Gastrocnemius medialis (tissue), 4 donors: ENCODE measurements at regions of chr7 and their contacts with region 1.

Region 1: GRCh38 chr7:26052721-26053120 is 99.3 kb upstream of the NFE2L3 start:
- DNase-seq: no peak
- ATAC-seq: no peak
- H3K4me3 ChIP-seq: no peak overlapping the region
- H3K27ac ChIP-seq: no peak overlapping the region
- H3K4me1 ChIP-seq: no peaks in the 10 kb centered on the region
- H3K27me3 ChIP-seq: peaks cover 0 to 9% (median 0%) of the 10 kb centered on the region in 3 donors
- CTCF ChIP-seq: no peak
- POLR2A ChIP-seq: no peak

Region 2: DNA sequence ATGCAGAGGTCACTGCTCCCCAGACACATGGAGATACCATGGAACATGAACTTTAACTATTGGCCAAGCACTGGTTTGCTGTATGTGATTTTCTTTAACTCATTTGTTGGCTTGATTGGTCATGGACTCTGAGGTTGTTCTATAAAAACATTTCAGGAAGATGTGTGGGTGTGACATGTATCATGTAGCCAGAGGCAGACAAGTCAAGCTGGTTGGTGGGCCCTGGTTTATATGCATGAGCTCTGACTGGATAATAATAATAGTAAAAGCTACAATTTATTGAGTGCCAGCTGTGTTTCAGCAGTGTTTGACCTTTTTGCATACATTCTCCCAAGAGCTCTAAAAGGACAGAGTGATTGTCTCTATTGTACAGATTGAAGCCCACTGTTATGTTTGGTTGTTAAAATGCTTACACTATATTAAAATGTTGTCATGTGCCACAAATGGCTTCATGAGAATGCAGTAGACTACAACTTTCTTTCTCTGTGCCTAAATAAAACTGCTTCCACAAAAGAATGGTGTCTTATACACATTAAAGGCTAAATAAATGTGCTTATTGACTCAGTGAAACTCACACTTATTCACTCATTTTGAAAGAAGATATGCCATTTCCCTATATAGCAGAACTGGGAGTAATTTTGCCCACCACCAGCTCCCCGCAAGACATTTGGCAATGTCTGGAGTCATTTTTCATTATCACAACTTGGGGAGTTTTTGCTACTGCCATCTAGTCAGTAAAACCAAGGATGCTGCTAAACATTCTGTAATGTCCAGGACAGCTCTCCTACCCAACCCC is 144.4 kb before region 1 on chr7:
- in situ Hi-C with region 1: loop called in 1 of 4 experiments (anchors 5 kb)
- intact Hi-C with region 1: no loop called
- DNase-seq: no peak
- ATAC-seq: no peak
- H3K4me3 ChIP-seq: no peak overlapping the region
- H3K27ac ChIP-seq: no peak overlapping the region
- H3K4me1 ChIP-seq: no peaks in the 10 kb centered on the region
- H3K27me3 ChIP-seq: no peaks in the 10 kb centered on the region
- CTCF ChIP-seq: no peak
- POLR2A ChIP-seq: no peak